Activated T-helper 2 cell treated with anti-CD3 and anti-CD28 coated beads, Interferon-gamma antibody, Interleukin-2, Interleukin-4, amounts not matched to agents 10 μg/mL and 5 μg/mL and 100 μg/mL, durations not matched to agents 14 hours and 24 hours and 36 hours (primary cell): ENCODE measurements at regions of chr18 and their contacts with region 1.

Region 1: DNA sequence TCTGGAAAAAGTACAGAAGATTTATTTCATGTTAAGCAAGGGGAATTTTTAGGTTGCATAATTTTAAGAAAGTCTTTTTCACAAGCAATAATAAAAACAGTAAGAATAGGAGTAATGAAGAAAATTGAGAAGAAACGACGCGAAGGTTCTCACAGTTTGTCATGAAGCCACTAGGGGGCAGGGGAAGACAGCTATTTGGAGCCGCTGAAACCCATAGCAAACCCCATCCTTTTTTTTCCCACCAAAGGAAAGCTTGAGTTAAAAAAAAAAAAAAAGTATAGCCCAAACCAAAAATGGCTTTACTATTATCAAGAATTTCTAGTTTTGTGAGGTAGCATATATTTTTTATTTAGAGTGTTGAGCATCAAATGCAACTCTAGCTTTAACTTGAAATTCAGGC is 300.9 kb downstream of the PHLPP1 start:
- DNase-seq: no peak
- H3K4me3 Mint-ChIP-seq: no peak overlapping the region
- H3K27ac Mint-ChIP-seq: no peak overlapping the region
- H3K4me1 Mint-ChIP-seq: no peaks in the 10 kb centered on the region
- H3K27me3 Mint-ChIP-seq: peaks cover 55% of the 10 kb centered on the region

Region 2: GRCh38 chr18:62802523-62802922 is 213.7 kb before region 1 on chr18:
- intact Hi-C with region 1: no loop called
- DNase-seq: no peak
- H3K4me3 Mint-ChIP-seq: no peak overlapping the region
- H3K27ac Mint-ChIP-seq: no peak overlapping the region
- H3K4me1 Mint-ChIP-seq: peaks cover 22% of the 10 kb centered on the region
- H3K27me3 Mint-ChIP-seq: no peaks in the 10 kb centered on the region

Region 3: GRCh38 chr18:62904396-62905285 is 111.6 kb before region 1 on chr18:
- intact Hi-C with region 1: no loop called
- DNase-seq: no peak
- H3K4me3 Mint-ChIP-seq: no peak overlapping the region
- H3K27ac Mint-ChIP-seq: no peak overlapping the region
- H3K4me1 Mint-ChIP-seq: no peaks in the 10 kb centered on the region
- H3K27me3 Mint-ChIP-seq: no peaks in the 10 kb centered on the region

Region 4: GRCh38 chr18:62919109-62919838 is 97.0 kb before region 1 on chr18:
- intact Hi-C with region 1: no loop called
- DNase-seq: no peak
- H3K4me3 Mint-ChIP-seq: no peak overlapping the region
- H3K27ac Mint-ChIP-seq: no peak overlapping the region
- H3K4me1 Mint-ChIP-seq: no peaks in the 10 kb centered on the region
- H3K27me3 Mint-ChIP-seq: no peaks in the 10 kb centered on the region

Region 5: DNA sequence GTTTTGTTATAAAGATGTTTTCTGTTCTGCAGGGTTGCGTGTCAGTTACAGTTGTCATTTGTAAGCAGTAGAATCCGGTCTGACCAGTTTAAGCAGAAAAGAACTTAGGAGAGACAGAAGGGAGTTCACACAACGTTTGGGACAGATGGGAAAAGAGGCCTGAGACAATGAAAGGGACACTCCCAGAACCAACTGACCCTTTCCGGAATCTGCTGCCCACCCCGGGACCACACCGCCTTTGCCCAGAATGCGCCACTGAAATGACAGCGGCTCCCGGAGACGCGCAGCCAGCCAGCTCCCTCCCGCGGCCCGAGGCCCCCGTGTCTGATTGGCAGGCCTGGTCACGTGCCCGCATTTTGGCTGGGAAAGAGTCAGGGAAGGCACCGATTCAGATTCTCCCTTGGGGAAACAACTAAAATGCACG is 58.7 kb after region 1 on chr18:
- intact Hi-C with region 1: loop called (anchors 2 kb)
- DNase-seq: peak; percentile 56
- H3K4me3 Mint-ChIP-seq: peak overlapping the region; percentile 71
- H3K27ac Mint-ChIP-seq: no peak overlapping the region
- H3K4me1 Mint-ChIP-seq: peaks cover 13% of the 10 kb centered on the region
- H3K27me3 Mint-ChIP-seq: peaks cover 10% of the 10 kb centered on the region

Region 6: GRCh38 chr18:63111671-63112402 is 95.6 kb after region 1 on chr18:
- intact Hi-C with region 1: loop called (anchors 5 kb)
- DNase-seq: no peak
- H3K4me3 Mint-ChIP-seq: no peak overlapping the region
- H3K27ac Mint-ChIP-seq: no peak overlapping the region
- H3K4me1 Mint-ChIP-seq: peaks cover 34% of the 10 kb centered on the region
- H3K27me3 Mint-ChIP-seq: peaks cover 8% of the 10 kb centered on the region

Region 7: GRCh38 chr18:63131106-63131958 is 115.1 kb after region 1 on chr18:
- intact Hi-C with region 1: loop called (anchors 2 kb)
- DNase-seq: no peak
- H3K4me3 Mint-ChIP-seq: no peak overlapping the region
- H3K27ac Mint-ChIP-seq: no peak overlapping the region
- H3K4me1 Mint-ChIP-seq: peaks cover 37% of the 10 kb centered on the region
- H3K27me3 Mint-ChIP-seq: no peaks in the 10 kb centered on the region

Region 8: DNA sequence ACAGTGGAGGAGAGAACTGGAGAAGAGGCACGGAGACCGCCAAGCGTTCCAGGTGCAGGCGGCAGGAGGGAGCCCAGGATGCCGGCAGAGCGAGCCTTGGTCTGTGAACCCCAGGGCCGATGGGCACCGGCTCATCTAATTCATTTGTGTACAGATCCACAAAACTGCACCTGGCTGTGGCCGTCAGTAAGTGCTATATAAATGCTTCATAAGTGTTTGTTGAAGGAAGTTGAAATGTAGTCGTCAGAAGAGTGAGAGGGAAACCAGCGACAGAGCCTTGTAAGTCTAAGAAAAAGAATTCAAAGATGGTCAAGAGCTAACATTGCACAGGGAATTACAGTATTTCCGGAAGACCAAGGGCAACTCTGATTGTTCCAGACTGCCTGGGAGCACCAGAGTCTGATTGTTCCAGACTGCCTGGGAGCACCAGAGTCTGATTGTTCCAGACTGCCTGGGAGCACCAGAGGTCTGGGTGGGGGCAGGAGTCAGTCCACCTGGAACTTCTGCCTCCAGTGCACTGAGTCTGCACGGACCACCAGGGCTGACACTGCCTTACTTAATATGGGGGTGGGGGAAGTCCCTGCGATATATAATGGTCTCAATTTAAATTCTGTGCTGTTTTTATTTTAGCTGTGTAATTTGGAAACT is 191.0 kb after region 1 on chr18:
- intact Hi-C with region 1: loop called (anchors 5 kb)
- DNase-seq: no peak
- H3K4me3 Mint-ChIP-seq: peak overlapping the region; percentile 87
- H3K27ac Mint-ChIP-seq: peak overlapping the region; percentile 87
- H3K4me1 Mint-ChIP-seq: peaks cover 81% of the 10 kb centered on the region
- H3K27me3 Mint-ChIP-seq: no peaks in the 10 kb centered on the region

Region 9: GRCh38 chr18:63339920-63340484 is 323.7 kb after region 1 on chr18:
- intact Hi-C with region 1: loop called (anchors 1 kb)
- DNase-seq: no peak
- H3K4me3 Mint-ChIP-seq: no peak overlapping the region
- H3K27ac Mint-ChIP-seq: no peak overlapping the region
- H3K4me1 Mint-ChIP-seq: peaks cover 15% of the 10 kb centered on the region
- H3K27me3 Mint-ChIP-seq: no peaks in the 10 kb centered on the region

Region 10: GRCh38 chr18:63439334-63439733 is 423.1 kb after region 1 on chr18:
- intact Hi-C with region 1: loop called (anchors 1 kb)
- DNase-seq: no peak
- H3K4me3 Mint-ChIP-seq: no peak overlapping the region
- H3K27ac Mint-ChIP-seq: no peak overlapping the region
- H3K4me1 Mint-ChIP-seq: peaks cover 4% of the 10 kb centered on the region
- H3K27me3 Mint-ChIP-seq: peaks cover 23% of the 10 kb centered on the region